Activated naive CD8-positive, alpha-beta T cell treated with anti-CD3 and anti-CD28 coated beads, Interleukin-2, amount 10 ng/mL, durations not matched to agents 7 days and 5 days (primary cell): ENCODE measurements at regions of chr3 and their contacts with region 1.

Region 1: DNA sequence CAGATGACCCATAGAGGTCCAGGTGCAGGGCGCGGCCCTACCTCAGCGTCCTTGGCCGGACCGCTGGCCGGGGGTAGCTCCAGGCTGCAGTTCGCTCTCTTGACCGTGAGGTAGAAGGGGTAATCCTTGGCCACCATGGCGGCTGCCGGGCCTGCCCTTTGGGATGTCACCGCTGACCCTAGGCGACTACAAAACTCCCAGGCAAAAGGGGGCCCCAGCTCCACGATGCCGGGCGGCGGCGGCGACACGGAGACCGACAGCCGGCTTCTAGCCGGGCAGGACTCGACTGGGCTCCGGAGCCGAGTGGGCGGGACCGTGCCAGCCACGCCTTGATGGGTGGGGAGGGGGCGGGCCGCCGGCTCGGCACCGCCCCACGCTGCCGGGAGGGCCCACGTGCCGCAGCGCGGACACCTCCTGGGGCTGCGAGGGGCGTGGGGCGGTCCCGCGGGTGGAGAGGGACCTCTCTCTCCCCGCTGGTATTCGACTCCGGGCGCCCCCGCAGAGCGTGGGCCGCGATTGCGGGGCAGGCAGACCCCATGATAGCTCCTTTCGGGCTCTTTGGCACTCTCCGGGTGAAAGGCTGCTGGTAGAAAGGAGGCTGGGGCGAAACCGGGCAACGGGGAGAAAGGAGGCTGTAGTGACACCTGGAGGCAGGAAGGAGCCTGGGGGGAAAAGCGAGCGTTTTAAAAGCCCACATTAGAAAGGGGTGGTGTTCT is at the start of gene ARHGEF3:
- DNase-seq: peak; percentile 90
- ATAC-seq: peak; percentile 72
- H3K4me3 Mint-ChIP-seq: peak within 1 kb of the TSS; percentile 92
- H3K27ac Mint-ChIP-seq: peak within 1 kb of the TSS; percentile 91
- H3K4me1 Mint-ChIP-seq: peaks cover 26% of the 10 kb centered on the region
- H3K27me3 Mint-ChIP-seq: no peaks in the 10 kb centered on the region
- total RNA-seq, gene ARHGEF3: 130 TPM

Region 2: GRCh38 chr3:56682462-56683121 is 119.2 kb before region 1 on chr3:
- POLR2A ChIA-PET with region 1: interaction called, 15 read pairs
- DNase-seq: peak; percentile 86
- ATAC-seq: peak; percentile 76
- H3K4me3 Mint-ChIP-seq: peak overlapping the region; percentile 98
- H3K27ac Mint-ChIP-seq: peak overlapping the region; percentile 99
- H3K4me1 Mint-ChIP-seq: peaks cover 32% of the 10 kb centered on the region
- H3K27me3 Mint-ChIP-seq: no peaks in the 10 kb centered on the region

Region 3: GRCh38 chr3:56702490-56703315 is 99.1 kb before region 1 on chr3:
- POLR2A ChIA-PET with region 1: interaction called, 124 read pairs
- DNase-seq: no peak
- ATAC-seq: peak; percentile 40
- H3K4me3 Mint-ChIP-seq: no peak overlapping the region
- H3K27ac Mint-ChIP-seq: peak overlapping the region; percentile 59
- H3K4me1 Mint-ChIP-seq: peaks cover 29% of the 10 kb centered on the region
- H3K27me3 Mint-ChIP-seq: no peaks in the 10 kb centered on the region

Region 4: DNA sequence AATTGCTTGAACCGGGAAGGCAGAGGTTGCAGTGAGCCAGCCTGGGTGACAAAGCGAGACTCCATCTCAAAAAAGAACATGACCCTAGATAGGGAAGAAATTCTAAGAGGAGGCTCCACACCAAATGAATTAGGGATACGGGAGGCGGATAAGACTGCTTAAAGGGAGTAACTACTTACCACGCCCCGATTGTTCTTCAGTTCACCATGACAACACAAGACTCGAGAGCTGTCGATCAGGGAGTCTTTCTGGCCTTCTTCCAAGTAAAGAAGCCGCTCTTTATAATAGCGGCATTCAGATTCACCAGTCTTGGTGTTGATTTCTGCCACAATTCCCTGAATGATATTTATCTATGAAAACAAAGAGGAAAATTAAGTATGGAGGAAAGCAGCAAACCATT is 64.8 kb before region 1 on chr3:
- POLR2A ChIA-PET with region 1: interaction called, 12 read pairs
- DNase-seq: no peak
- ATAC-seq: no peak
- H3K4me3 Mint-ChIP-seq: no peak overlapping the region
- H3K27ac Mint-ChIP-seq: no peak overlapping the region
- H3K4me1 Mint-ChIP-seq: peaks cover 39% of the 10 kb centered on the region
- H3K27me3 Mint-ChIP-seq: no peaks in the 10 kb centered on the region

Region 5: DNA sequence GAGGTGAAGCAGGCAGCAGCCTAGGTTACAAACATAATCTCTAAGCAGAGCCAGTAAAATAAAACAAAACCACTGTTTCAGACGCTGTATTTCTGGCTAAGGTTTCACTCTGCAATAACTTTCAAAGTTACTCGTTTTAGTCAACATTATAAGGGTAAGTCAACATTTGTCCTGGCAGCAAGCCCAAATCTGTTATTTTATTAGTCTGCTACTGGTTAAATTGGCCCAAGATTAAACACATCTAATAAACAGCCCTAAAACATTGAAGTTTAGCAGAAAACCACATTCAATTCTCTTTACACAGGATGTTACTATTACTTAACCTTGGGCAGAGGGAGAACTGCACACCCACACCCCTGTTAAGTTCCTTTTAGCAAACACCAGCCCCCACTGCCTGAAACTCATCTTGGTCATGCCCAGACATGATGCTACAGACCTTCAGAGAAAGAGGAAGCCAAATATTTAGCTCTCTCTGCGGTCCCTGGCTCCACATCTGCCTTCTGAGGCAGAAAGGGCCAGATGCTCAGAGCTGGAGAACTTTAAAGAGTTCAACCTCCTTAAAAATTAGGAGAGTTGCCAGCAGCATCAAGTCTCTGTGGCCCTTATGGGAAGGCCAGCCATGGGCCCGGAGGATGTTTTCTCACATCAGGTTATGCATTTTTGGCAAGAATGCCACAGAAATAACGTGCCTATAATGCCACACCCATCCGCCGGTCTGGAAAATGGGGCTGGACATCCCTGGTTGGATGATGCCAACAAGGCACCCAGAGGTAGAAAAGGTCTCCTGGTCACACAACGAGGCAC is 18.0 kb before region 1 on chr3:
- POLR2A ChIA-PET with region 1: interaction called, 285 read pairs
- DNase-seq: peak; percentile 59
- ATAC-seq: peak; percentile 88
- H3K4me3 Mint-ChIP-seq: peak overlapping the region; percentile 76
- H3K27ac Mint-ChIP-seq: peak overlapping the region; percentile 90
- H3K4me1 Mint-ChIP-seq: peaks cover 85% of the 10 kb centered on the region
- H3K27me3 Mint-ChIP-seq: no peaks in the 10 kb centered on the region

Region 6: DNA sequence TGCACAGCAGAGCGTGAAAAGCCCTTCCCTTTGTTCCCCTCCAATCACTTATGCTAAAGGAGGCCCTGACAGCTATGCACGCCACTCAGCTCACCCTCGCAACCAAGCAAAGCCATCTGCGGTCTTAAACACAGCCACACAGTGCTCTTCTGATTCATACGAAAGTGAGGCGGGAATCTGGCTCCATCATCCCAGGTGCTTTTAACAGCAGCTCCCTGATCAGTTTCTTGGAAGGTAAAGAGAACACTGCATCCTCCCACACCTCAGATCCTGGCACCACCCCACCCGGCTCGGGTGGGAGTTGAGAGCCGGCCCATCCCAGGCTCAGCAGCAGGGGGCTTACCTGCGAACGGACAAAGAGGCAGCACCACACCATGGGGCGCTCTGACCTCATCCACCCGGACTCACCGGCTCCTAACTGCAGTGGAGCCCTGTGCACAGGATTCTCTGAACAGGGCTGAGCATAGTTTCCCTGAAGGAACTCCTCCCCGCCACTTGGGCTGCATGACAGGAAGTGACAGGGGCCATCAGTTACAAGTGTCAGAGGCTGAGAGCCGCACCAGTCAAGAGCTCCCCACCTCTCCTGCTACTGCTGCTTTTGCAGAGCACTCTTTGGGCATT is 114.3 kb after region 1 on chr3:
- POLR2A ChIA-PET with region 1: interaction called, 85 read pairs
- DNase-seq: peak; percentile 77
- ATAC-seq: peak; percentile 93
- H3K4me3 Mint-ChIP-seq: peak overlapping the region; percentile 89
- H3K27ac Mint-ChIP-seq: peak overlapping the region; percentile 96
- H3K4me1 Mint-ChIP-seq: peaks cover 65% of the 10 kb centered on the region
- H3K27me3 Mint-ChIP-seq: no peaks in the 10 kb centered on the region

Region 7: DNA sequence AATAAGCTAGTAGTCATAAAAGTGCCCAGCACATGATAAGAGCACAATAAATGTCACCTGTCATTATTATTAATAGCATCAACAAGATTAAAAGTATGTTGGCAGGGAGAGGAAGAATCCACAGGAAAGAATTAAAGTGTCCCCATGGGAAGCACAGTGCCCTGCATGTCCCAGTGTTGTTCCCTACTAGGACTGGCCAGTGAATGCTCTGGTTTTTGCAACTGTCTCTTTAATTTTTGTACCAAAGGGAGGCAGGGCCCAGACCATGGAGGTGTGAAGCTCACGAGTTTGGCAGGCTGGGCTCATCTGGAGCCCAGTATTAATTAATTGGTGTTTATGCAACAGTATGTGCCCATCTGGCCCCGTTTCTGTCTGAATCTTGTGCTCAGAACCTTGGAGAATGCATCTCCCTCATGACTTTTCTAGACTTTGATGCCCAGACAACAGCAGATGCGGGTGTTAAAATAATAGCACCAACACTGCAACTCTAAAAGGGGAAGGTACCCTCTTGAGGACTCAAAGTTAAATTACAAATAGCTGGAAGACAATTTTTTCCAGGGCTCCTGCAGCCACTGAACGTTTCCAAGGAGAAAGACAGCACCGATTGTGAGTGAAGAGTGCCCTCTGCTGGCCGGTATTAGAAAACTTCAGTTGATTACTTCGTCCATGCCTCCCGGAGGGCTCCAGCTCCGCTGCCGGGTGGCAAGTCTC is 186.8 kb after region 1 on chr3:
- POLR2A ChIA-PET with region 1: interaction called, 35 read pairs
- DNase-seq: peak; percentile 64
- ATAC-seq: peak; percentile 60
- H3K4me3 Mint-ChIP-seq: no peak overlapping the region
- H3K27ac Mint-ChIP-seq: no peak overlapping the region
- H3K4me1 Mint-ChIP-seq: peaks cover 21% of the 10 kb centered on the region
- H3K27me3 Mint-ChIP-seq: peaks cover 18% of the 10 kb centered on the region